Heart left ventricle (tissue), 16 donors: ENCODE measurements at regions of chr9 and their contacts with region 1.

Region 1: DNA sequence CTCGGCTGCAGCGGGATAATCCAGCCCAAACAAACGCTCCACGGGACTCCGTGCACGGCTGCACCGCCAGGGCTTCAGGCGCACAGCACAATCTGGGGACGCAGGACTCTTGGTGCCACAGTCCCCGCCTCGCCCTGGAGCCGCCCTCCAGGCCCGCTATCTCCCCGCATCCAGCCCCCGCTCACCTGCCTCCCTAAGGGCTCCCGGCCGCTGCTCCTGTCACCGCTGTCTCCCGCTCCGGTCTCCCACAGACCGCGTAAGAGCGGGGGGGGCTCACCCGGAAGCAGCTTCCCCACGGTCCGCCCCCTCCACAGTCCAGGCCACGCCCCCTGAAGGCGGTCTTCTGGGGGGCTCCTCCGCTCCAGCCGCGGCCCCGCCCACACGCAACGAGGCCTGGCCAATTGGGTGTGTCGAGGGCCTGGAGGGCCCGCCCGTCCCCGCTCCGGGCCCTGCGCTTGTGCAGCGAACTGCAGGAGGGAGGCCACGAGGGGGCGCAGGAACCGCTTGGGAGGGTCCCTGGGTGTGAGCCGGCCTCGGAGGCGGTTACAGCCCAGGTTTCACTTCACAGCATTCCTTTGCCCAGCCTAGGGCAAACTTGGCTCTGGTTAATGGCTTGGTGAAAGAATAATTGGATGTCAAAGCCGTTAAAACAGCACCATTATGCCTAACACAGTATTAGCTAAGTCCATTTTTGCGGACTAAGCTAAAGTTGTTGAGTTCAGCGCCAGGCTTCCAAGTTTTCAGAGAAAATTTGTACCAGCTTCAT is at the start of gene ALAD:
- DNase-seq: peak; percentile 99 to 100 (median 100)
- ATAC-seq: peak; percentile 98 to 99 (median 99)
- H3K4me3 ChIP-seq: peak within 1 kb of the TSS; percentile 70 to 94 (median 88)
- H3K27ac ChIP-seq: peak within 1 kb of the TSS; percentile 48 to 88 (median 74)
- H3K4me1 ChIP-seq: peaks cover 0 to 49% (median 23%) of the 10 kb centered on the region in 12 donors
- H3K27me3 ChIP-seq: no peaks in the 10 kb centered on the region
- CTCF ChIP-seq: peak; percentile 93 to 100 (median 97)
- POLR2A ChIP-seq: peak in 1 of 2 donors; percentile 83
- total RNA-seq, gene ALAD: 39.8 to 153 (median 91.8) TPM

Region 2: GRCh38 chr9:113150670-113151611 is 250.3 kb before region 1 on chr9 and contains the start of gene SLC31A2:
- intact Hi-C with region 1: loop called in 1 of 10 experiments (anchors 5 kb)
- DNase-seq: peak; percentile 90 to 96 (median 91)
- ATAC-seq: peak; percentile 90 to 97 (median 95)
- H3K4me3 ChIP-seq: peak within 1 kb of the TSS; percentile 72 to 98 (median 94)
- H3K27ac ChIP-seq: peak within 1 kb of the TSS; percentile 48 to 91 (median 80)
- H3K4me1 ChIP-seq: peaks cover 0 to 59% (median 14%) of the 10 kb centered on the region in 12 donors
- H3K27me3 ChIP-seq: no peaks in the 10 kb centered on the region
- CTCF ChIP-seq: peak in 10 of 12 donors; percentile 32 to 67 (median 44)
- POLR2A ChIP-seq: peak; percentile 14 to 82
- total RNA-seq, gene SLC31A2: 5.2 to 26.4 (median 13.8) TPM

Region 3: DNA sequence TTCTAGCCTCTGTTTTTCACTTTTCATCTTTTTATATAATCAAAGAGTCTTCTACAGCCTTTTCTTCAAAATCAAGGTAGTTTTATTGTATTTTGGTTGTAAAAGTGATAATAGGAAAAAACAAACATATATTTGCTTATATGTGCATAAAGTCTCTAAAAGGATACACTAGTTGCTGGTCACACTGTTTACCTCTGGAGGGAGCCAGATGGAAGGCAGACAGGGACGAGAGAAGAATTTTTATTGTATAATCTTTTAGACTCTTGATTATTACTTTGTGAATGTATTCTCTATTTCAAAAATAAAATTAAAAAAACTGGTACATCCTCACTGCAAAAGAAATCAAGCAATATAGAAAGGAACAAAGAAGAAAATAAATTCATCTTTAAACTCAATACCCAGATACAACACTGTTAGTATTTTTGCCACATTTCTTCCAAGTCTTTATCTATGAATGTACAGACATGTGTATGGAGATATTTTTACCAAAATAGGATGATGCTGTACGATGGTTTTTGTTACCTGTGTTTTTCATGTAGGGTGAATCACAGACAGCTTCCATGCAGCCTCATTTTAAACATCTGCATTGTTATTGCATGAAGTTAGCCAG is 91.9 kb before region 1 on chr9:
- intact Hi-C with region 1: loop called (anchors 1 to 5 kb)
- DNase-seq: no peak
- ATAC-seq: peak in 2 of 4 donors; percentile 63 to 64
- H3K4me3 ChIP-seq: no peak overlapping the region
- H3K27ac ChIP-seq: peak overlapping the region in 3 of 12 donors; percentile 16 to 73 (median 71)
- H3K4me1 ChIP-seq: peaks cover 0 to 22% (median 9%) of the 10 kb centered on the region in 12 donors
- H3K27me3 ChIP-seq: no peaks in the 10 kb centered on the region
- CTCF ChIP-seq: peak; percentile 56 to 83 (median 65)
- POLR2A ChIP-seq: no peak

Region 4: DNA sequence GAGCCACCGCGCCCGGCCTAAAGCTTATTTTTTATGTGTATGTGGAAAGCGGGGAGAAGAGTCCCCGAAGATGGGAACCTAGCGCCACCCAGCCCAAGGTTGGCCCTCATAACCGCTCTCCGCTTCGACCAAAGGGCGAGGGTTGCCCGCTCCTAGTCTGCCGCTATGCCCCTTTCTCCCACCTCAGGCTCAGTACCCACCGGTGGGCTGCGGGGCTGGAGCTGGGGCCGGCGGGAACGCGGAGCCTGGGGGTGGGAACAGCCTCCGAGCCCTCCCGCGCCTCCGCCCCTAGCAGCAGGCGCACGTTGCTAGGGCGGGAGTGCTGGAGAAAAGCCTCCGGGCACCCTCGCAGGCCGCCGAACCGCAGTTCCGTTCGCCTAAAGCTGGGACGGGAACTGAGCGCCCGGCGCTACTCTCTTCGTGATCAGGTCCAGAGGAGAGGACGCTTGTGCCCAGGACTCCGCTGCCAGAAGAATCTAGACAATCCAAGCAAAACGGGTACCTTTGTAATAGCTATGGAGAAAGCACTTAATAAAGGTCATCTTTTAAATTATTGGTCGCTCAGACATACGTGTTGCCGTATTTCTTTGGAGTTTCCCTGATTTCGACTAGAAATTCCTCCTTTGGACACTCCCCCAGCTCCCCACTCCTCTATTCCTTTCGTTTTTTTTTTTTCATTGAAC is 61.1 kb before region 1 on chr9 and contains the start of gene WDR31:
- intact Hi-C with region 1: loop called in 7 of 10 experiments (anchors 2 to 10 kb)
- DNase-seq: peak; percentile 87 to 93 (median 89)
- ATAC-seq: peak; percentile 72 to 91 (median 90)
- H3K4me3 ChIP-seq: peak within 1 kb of the TSS; percentile 43 to 99 (median 80)
- H3K27ac ChIP-seq: peak within 1 kb of the TSS; percentile 37 to 90 (median 80)
- H3K4me1 ChIP-seq: peaks cover 0 to 26% (median 12%) of the 10 kb centered on the region in 12 donors
- H3K27me3 ChIP-seq: no peaks in the 10 kb centered on the region
- CTCF ChIP-seq: peak in 1 of 12 donors; percentile 31
- POLR2A ChIP-seq: peak in 1 of 2 donors; percentile 52
- total RNA-seq, gene WDR31: 8.1 to 22.4 (median 14.4) TPM